ENCODE measurements at regions of chr1 and their contacts with region 1.

Region 1: DNA sequence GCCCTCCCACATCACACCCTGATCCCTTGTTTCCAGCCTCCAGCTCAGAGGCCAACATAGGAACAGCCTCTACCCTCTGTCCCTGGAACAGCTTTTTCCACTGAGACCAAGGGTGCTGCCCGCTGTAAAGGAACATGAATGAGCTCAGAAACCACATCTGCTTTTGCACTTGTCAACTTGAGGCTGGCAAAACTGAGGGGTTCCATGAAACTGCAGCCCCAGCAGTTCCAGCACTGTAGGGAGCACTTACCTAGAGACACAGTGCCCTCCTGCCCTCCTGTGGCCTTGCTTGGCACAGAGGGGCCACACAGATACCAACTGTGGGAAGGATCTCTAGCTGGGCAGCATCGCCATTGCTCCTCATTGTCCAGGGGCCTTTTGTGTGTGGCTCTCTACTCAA is 51.7 kb downstream of the ITPKB start:
- DNase-seq: peak; percentile 75
- ATAC-seq: peak; percentile 36
- H3K4me3 Mint-ChIP-seq: no peak overlapping the region
- H3K27ac Mint-ChIP-seq: peak overlapping the region; percentile 100
- H3K4me1 Mint-ChIP-seq: peaks cover 100% of the 10 kb centered on the region
- H3K27me3 Mint-ChIP-seq: no peaks in the 10 kb centered on the region

Region 2: DNA sequence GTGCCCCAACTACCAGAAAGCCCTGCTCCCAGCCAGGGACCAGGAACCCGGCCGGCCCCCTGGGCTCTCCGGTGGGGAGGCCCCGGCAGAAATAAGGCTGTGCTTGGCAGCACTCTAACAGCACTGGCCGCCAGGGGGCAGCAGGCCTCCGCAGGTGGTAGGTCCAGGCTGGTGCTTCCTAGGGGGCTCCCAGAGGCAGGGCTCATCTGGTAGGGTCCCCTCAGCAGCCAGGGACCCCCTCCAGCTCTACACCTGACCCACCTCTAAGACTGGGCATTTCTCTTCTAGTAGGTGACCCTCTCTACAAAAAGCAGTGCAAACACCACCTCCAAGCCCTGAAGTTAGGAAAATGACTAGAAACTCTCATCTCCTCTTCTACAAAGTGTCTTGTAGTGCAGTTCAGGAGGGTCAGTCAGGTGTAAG is 53.2 kb before region 1 on chr1:
- CTCF ChIA-PET with region 1: interaction called, 45 read pairs
- POLR2A ChIA-PET with region 1: interaction called, 6 read pairs
- intact Hi-C with region 1: loop called (anchors 1 to 2 kb)
- DNase-seq: peak; percentile 91
- ATAC-seq: peak; percentile 70
- H3K4me3 Mint-ChIP-seq: no peak overlapping the region
- H3K27ac Mint-ChIP-seq: peak overlapping the region; percentile 17
- H3K4me1 Mint-ChIP-seq: peaks cover 49% of the 10 kb centered on the region
- H3K27me3 Mint-ChIP-seq: no peaks in the 10 kb centered on the region

Region 3: GRCh38 chr1:226649780-226650179 is 37.6 kb before region 1 on chr1:
- CTCF ChIA-PET with region 1: interaction called, 6 read pairs
- POLR2A ChIA-PET with region 1: interaction called, 3 read pairs
- intact Hi-C with region 1: loop called (anchors 5 kb)
- DNase-seq: peak; percentile 67
- ATAC-seq: no peak
- H3K4me3 Mint-ChIP-seq: no peak overlapping the region
- H3K27ac Mint-ChIP-seq: peak overlapping the region; percentile 52
- H3K4me1 Mint-ChIP-seq: peaks cover 48% of the 10 kb centered on the region
- H3K27me3 Mint-ChIP-seq: no peaks in the 10 kb centered on the region

Region 4: GRCh38 chr1:226702957-226703831 is 15.8 kb after region 1 on chr1:
- CTCF ChIA-PET with region 1: interaction called, 27 read pairs
- POLR2A ChIA-PET with region 1: interaction called, 6 read pairs
- intact Hi-C with region 1: loop called in 1 of 2 experiments (anchors 1 kb)
- DNase-seq: peak; percentile 90
- ATAC-seq: peak; percentile 61
- H3K4me3 Mint-ChIP-seq: peak overlapping the region; percentile 84
- H3K27ac Mint-ChIP-seq: peak overlapping the region; percentile 97
- H3K4me1 Mint-ChIP-seq: peaks cover 85% of the 10 kb centered on the region
- H3K27me3 Mint-ChIP-seq: no peaks in the 10 kb centered on the region

Region 5: DNA sequence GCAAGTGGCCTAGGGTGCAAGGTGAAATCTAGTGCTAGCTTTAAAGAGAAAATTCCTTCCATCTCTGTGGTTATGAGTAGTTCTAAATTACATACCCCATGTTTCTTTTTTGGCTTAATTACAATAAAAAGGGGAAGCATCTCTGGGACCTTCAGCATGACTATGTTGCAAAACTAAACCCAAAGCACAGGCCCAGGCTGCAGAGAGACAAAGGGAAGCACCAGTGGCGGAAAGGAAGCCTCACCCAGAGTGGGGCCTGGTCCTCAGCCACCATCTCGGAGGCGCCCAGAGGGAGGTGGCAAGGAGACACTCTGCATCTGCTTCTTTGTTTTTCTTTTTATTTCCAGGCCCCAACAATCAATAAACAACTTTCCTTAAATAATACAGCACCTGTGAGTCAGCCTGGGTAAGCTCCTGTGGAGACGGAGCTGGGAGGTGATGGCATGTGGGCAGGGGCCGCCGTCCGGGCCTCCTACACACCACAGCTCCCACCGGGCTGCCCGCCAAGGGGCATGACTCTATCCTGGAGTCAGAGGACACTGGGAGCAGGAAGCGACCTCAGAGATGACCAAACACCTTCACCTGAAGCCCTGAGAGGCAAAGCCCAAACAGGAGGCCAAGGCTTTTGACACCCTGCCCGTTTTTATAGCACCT is 30.0 kb after region 1 on chr1:
- CTCF ChIA-PET with region 1: no interaction called
- POLR2A ChIA-PET with region 1: no interaction called
- intact Hi-C with region 1: no loop called
- DNase-seq: peak; percentile 50
- ATAC-seq: peak; percentile 37
- H3K4me3 Mint-ChIP-seq: peak overlapping the region; percentile 48
- H3K27ac Mint-ChIP-seq: peak overlapping the region; percentile 84
- H3K4me1 Mint-ChIP-seq: peaks cover 90% of the 10 kb centered on the region
- H3K27me3 Mint-ChIP-seq: no peaks in the 10 kb centered on the region